Left lung (tissue), 14 donors: ENCODE measurements at regions of chr15 and their contacts with region 1.

Region 1: GRCh38 chr15:99068186-99068585 is 36.7 kb upstream of the SYNM start:
- DNase-seq: no peak
- ATAC-seq: no peak
- H3K4me3 ChIP-seq: no peak overlapping the region
- H3K27ac ChIP-seq: no peak overlapping the region
- H3K4me1 ChIP-seq: no peaks in the 10 kb centered on the region
- H3K27me3 ChIP-seq: no peaks in the 10 kb centered on the region
- CTCF ChIP-seq: no peak

Region 2: GRCh38 chr15:98525661-98526001 is 542.6 kb before region 1 on chr15:
- intact Hi-C with region 1: loop called in 1 of 2 experiments (anchors 10 kb)
- DNase-seq: peak in 3 of 4 donors; percentile 42 to 77 (median 66)
- ATAC-seq: no peak
- H3K4me3 ChIP-seq: no peak overlapping the region
- H3K27ac ChIP-seq: peak overlapping the region in 1 of 2 donors; percentile 18
- H3K4me1 ChIP-seq: peaks cover 0 to 7% of the 10 kb centered on the region in 2 donors
- H3K27me3 ChIP-seq: no peaks in the 10 kb centered on the region
- CTCF ChIP-seq: no peak

Region 3: GRCh38 chr15:98779463-98780071 is 288.6 kb before region 1 on chr15:
- intact Hi-C with region 1: loop called in 1 of 2 experiments (anchors 10 kb)
- DNase-seq: peak in 3 of 4 donors; percentile 78 to 89 (median 79)
- ATAC-seq: peak; percentile 90
- H3K4me3 ChIP-seq: no peak overlapping the region
- H3K27ac ChIP-seq: no peak overlapping the region
- H3K4me1 ChIP-seq: peaks cover 10 to 44% of the 10 kb centered on the region in 2 donors
- H3K27me3 ChIP-seq: no peaks in the 10 kb centered on the region
- CTCF ChIP-seq: peak; percentile 86 to 92